ENCODE measurements at regions of chr17 and their contacts with region 1.

Region 1: GRCh38 chr17:49496183-49496866 is 1.2 kb downstream of the NGFR start:
- DNase-seq: peak; percentile 92
- ATAC-seq: peak; percentile 85
- H3K4me3 Mint-ChIP-seq: peak overlapping the region; percentile 63
- H3K27ac Mint-ChIP-seq: no peak overlapping the region
- H3K4me1 Mint-ChIP-seq: peaks cover 16% of the 10 kb centered on the region
- H3K27me3 Mint-ChIP-seq: peaks cover 51% of the 10 kb centered on the region

Region 2: GRCh38 chr17:48843172-48843900 is 653.0 kb before region 1 on chr17:
- CTCF ChIA-PET with region 1: no interaction called
- POLR2A ChIA-PET with region 1: no interaction called
- intact Hi-C with region 1: no loop called
- DNase-seq: no peak
- ATAC-seq: no peak
- H3K4me3 Mint-ChIP-seq: no peak overlapping the region
- H3K27ac Mint-ChIP-seq: no peak overlapping the region
- H3K4me1 Mint-ChIP-seq: peaks cover 39% of the 10 kb centered on the region
- H3K27me3 Mint-ChIP-seq: no peaks in the 10 kb centered on the region

Region 3: GRCh38 chr17:49434821-49435670 is 61.3 kb before region 1 on chr17:
- CTCF ChIA-PET with region 1: interaction called, 5 read pairs
- POLR2A ChIA-PET with region 1: no interaction called
- intact Hi-C with region 1: loop called (anchors 2 to 5 kb)
- DNase-seq: peak; percentile 66
- ATAC-seq: peak; percentile 60
- H3K4me3 Mint-ChIP-seq: no peak overlapping the region
- H3K27ac Mint-ChIP-seq: no peak overlapping the region
- H3K4me1 Mint-ChIP-seq: no peaks in the 10 kb centered on the region
- H3K27me3 Mint-ChIP-seq: peaks cover 20% of the 10 kb centered on the region

Region 4: GRCh38 chr17:49968380-49969133 is 472.2 kb after region 1 on chr17:
- CTCF ChIA-PET with region 1: no interaction called
- POLR2A ChIA-PET with region 1: no interaction called
- intact Hi-C with region 1: loop called in 1 of 2 experiments (anchors 5 kb)
- DNase-seq: peak; percentile 85
- ATAC-seq: peak; percentile 83
- H3K4me3 Mint-ChIP-seq: peak overlapping the region; percentile 82
- H3K27ac Mint-ChIP-seq: peak overlapping the region; percentile 61
- H3K4me1 Mint-ChIP-seq: peaks cover 34% of the 10 kb centered on the region
- H3K27me3 Mint-ChIP-seq: peaks cover 70% of the 10 kb centered on the region